ENCODE measurements at regions of chr3 and their contacts with region 1.

Region 1: GRCh38 chr3:123723522-123724168 is 138.8 kb upstream of the HACD2 start:
- DNase-seq: peak; percentile 51 to 77 (median 56)
- ATAC-seq: peak; percentile 92
- H3K4me3 ChIP-seq: no peak overlapping the region
- H3K27ac ChIP-seq: no peak overlapping the region
- H3K4me1 ChIP-seq: no peaks in the 10 kb centered on the region
- H3K27me3 ChIP-seq: no peaks in the 10 kb centered on the region
- CTCF ChIP-seq: peak; percentile 72 to 80 (median 75)
- EP300 ChIP-seq: no peak
- POLR2A ChIP-seq: no peak
- RAD21 ChIP-seq: peak; percentile 22 to 57; a peak in 2 of 4 replicates

Region 2: GRCh38 chr3:123700791-123701722 is 22.6 kb before region 1 on chr3:
- CTCF ChIA-PET with region 1: no interaction called
- POLR2A ChIA-PET with region 1: no interaction called
- in situ Hi-C with region 1: no loop called
- intact Hi-C with region 1: no loop called
- DNase-seq: no peak
- ATAC-seq: no peak
- H3K4me3 ChIP-seq: no peak overlapping the region
- H3K27ac ChIP-seq: no peak overlapping the region
- H3K4me1 ChIP-seq: no peaks in the 10 kb centered on the region
- H3K27me3 ChIP-seq: peaks cover 0 to 20% of the 10 kb centered on the region in 2 experiments; a peak in 2 of 5 replicates
- CTCF ChIP-seq: no peak
- EP300 ChIP-seq: no peak
- POLR2A ChIP-seq: no peak
- RAD21 ChIP-seq: no peak

Region 3: GRCh38 chr3:125684199-125684598 is 1960.6 kb after region 1 on chr3:
- CTCF ChIA-PET with region 1: no interaction called
- POLR2A ChIA-PET with region 1: no interaction called
- in situ Hi-C with region 1: loop called (anchors 5 kb)
- intact Hi-C with region 1: no loop called
- DNase-seq: peak in 1 of 4 experiments; percentile 7
- ATAC-seq: peak; percentile 65
- H3K4me3 ChIP-seq: no peak overlapping the region
- H3K27ac ChIP-seq: no peak overlapping the region
- H3K4me1 ChIP-seq: no peaks in the 10 kb centered on the region
- H3K27me3 ChIP-seq: no peaks in the 10 kb centered on the region; a peak in 1 of 5 replicates
- CTCF ChIP-seq: peak; percentile 37 to 48 (median 42); a peak in 5 of 6 replicates
- EP300 ChIP-seq: no peak
- POLR2A ChIP-seq: no peak
- RAD21 ChIP-seq: no peak